ENCODE measurements at regions of chr6 and their contacts with region 1.

Region 1: DNA sequence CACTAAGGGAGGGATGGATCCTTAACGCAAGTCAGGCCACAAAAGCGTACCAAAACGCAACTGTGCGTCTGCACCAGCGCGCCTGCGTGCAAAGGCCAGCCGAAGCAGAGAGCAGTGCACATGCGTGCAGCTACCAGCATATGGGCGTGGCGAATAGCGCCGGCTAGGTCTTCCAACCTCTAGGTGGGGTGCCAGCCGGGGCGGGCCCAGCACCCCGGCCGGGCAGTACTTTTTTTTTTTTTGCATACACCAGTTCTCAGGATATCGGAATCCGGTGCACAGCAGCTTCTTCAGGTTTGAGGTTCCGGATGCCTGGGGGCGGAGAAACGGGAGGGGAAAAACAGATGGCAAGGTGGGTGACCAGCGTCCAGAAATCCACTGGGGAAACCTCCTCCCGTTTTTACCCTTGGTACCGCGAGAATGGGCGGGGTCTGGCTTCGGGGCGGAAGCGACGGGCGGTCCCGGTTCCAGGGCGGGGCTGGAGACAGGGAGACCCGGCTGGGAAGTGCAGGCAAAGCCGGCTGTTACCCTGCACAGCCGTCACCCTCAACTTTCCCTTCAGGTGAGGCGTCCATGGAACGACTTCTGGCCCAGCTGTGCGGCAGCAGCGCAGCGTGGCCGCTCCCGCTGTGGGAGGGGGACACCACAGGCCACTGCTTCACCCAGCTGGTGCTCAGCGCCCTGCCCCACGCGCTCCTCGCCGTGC is at the start of gene ABCC10:
- DNase-seq: peak; percentile 97
- ATAC-seq: peak; percentile 93
- H3K4me3 ChIP-seq: peak within 1 kb of the TSS; percentile 59 to 93 (median 83)
- H3K4me3 Mint-ChIP-seq: peak within 1 kb of the TSS; percentile 96
- H3K27ac ChIP-seq: peak within 1 kb of the TSS; percentile 72 to 88
- H3K27ac Mint-ChIP-seq: peak within 1 kb of the TSS; percentile 96
- H3K4me1 ChIP-seq: peaks cover 16 to 19% of the 10 kb centered on the region in 2 donors
- H3K4me1 Mint-ChIP-seq: peaks cover 24% of the 10 kb centered on the region
- H3K27me3 ChIP-seq: no peaks in the 10 kb centered on the region
- H3K27me3 Mint-ChIP-seq: no peaks in the 10 kb centered on the region
- CTCF ChIP-seq: peak; percentile 21
- total RNA-seq, gene ABCC10: 71.5 and 84.2 TPM in 2 replicates

Region 2: GRCh38 chr6:42851599-42851998 is 576.0 kb before region 1 on chr6:
- CTCF ChIA-PET with region 1: no interaction called
- POLR2A ChIA-PET with region 1: no interaction called
- intact Hi-C with region 1: no loop called
- DNase-seq: no peak
- ATAC-seq: no peak
- H3K4me3 ChIP-seq: no peak overlapping the region
- H3K4me3 Mint-ChIP-seq: no peak overlapping the region
- H3K27ac ChIP-seq: no peak overlapping the region
- H3K27ac Mint-ChIP-seq: no peak overlapping the region
- H3K4me1 ChIP-seq: no peaks in the 10 kb centered on the region
- H3K4me1 Mint-ChIP-seq: no peaks in the 10 kb centered on the region
- H3K27me3 ChIP-seq: no peaks in the 10 kb centered on the region
- H3K27me3 Mint-ChIP-seq: no peaks in the 10 kb centered on the region
- CTCF ChIP-seq: no peak

Region 3: GRCh38 chr6:43247113-43247999 is 180.2 kb before region 1 on chr6:
- CTCF ChIA-PET with region 1: no interaction called
- POLR2A ChIA-PET with region 1: no interaction called
- intact Hi-C with region 1: loop called (anchors 1 kb)
- DNase-seq: peak; percentile 87
- ATAC-seq: peak; percentile 96
- H3K4me3 ChIP-seq: peak overlapping the region; percentile 51 to 85 (median 72)
- H3K4me3 Mint-ChIP-seq: no peak overlapping the region
- H3K27ac ChIP-seq: peak overlapping the region; percentile 51 to 65
- H3K27ac Mint-ChIP-seq: peak overlapping the region; percentile 87
- H3K4me1 ChIP-seq: peaks cover 19 to 21% of the 10 kb centered on the region in 2 donors
- H3K4me1 Mint-ChIP-seq: peaks cover 22% of the 10 kb centered on the region
- H3K27me3 ChIP-seq: peaks cover 0 to 62% (median 38%) of the 10 kb centered on the region in 4 experiments
- H3K27me3 Mint-ChIP-seq: peaks cover 29% of the 10 kb centered on the region
- CTCF ChIP-seq: no peak

Region 4: GRCh38 chr6:43369174-43370022 is 58.2 kb before region 1 on chr6 and contains the start of gene ZNF318:
- CTCF ChIA-PET with region 1: interaction called, 8 read pairs
- POLR2A ChIA-PET with region 1: interaction called, 9 read pairs
- intact Hi-C with region 1: loop called (anchors 1 kb)
- DNase-seq: peak; percentile 98
- ATAC-seq: peak; percentile 90
- H3K4me3 ChIP-seq: peak within 1 kb of the TSS; percentile 83 to 95 (median 88)
- H3K4me3 Mint-ChIP-seq: peak within 1 kb of the TSS; percentile 98
- H3K27ac ChIP-seq: peak within 1 kb of the TSS; percentile 92 to 94
- H3K27ac Mint-ChIP-seq: peak within 1 kb of the TSS; percentile 97
- H3K4me1 ChIP-seq: peaks cover 64 to 69% of the 10 kb centered on the region in 2 donors
- H3K4me1 Mint-ChIP-seq: peaks cover 72% of the 10 kb centered on the region
- H3K27me3 ChIP-seq: no peaks in the 10 kb centered on the region
- H3K27me3 Mint-ChIP-seq: no peaks in the 10 kb centered on the region
- CTCF ChIP-seq: no peak
- total RNA-seq, gene ZNF318: 79.7 and 80.9 TPM in 2 replicates

Region 5: GRCh38 chr6:43454696-43455530 is 27.4 kb after region 1 on chr6:
- CTCF ChIA-PET with region 1: interaction called, 7 read pairs
- POLR2A ChIA-PET with region 1: interaction called, 4 read pairs
- intact Hi-C with region 1: loop called (anchors 1 kb)
- DNase-seq: peak; percentile 73
- ATAC-seq: peak; percentile 53
- H3K4me3 ChIP-seq: peak overlapping the region; percentile 18 to 67 (median 61)
- H3K4me3 Mint-ChIP-seq: peak overlapping the region; percentile 89
- H3K27ac ChIP-seq: no peak overlapping the region
- H3K27ac Mint-ChIP-seq: peak overlapping the region; percentile 63
- H3K4me1 ChIP-seq: peaks cover 7 to 12% of the 10 kb centered on the region in 2 donors
- H3K4me1 Mint-ChIP-seq: peaks cover 14% of the 10 kb centered on the region
- H3K27me3 ChIP-seq: peaks cover 0 to 4% (median 2%) of the 10 kb centered on the region in 4 experiments
- H3K27me3 Mint-ChIP-seq: peaks cover 3% of the 10 kb centered on the region
- CTCF ChIP-seq: peak; percentile 90

Region 6: DNA sequence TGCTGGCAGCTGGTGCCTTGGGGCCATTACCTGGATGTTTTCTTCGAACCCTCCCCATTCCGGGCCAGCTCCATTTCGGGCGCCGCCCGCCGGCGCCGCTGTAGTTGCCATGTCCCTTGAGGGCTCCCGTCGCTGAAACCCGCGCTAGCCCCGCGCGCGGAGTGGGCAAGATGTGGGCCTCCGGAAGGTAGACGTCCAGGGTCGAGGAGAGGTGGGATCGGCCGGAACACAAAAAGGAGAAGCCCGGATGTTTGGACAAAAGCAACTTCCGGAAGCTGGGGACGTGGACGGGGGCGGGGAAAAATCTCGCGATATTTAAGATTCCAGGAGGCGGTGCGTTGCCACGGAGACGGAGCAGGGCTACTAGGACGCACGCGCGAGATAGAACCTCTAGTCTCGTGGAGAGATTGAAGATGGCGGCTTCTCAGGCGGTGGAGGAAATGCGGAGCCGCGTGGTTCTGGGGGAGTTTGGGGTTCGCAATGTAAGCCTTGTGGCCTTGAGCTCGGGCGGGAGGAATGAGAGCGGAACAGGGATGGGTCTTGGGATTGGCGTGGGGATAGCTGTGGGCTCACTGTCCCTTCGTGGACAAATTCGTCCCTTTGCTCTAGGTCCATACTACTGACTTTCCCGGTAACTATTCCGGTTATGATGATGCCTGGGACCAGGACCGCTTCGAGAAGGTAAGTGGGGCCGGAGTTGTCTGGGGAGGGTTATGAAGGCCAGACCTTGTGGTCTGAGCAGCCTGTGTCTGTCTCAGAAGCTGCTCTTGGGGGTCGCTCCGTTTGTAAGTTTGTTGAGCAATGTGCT is 89.3 kb after region 1 on chr6 and contains the starts of genes POLR1C and YIPF3:
- CTCF ChIA-PET with region 1: no interaction called
- POLR2A ChIA-PET with region 1: interaction called, 5 read pairs
- intact Hi-C with region 1: loop called (anchors 2 kb)
- DNase-seq: peak; percentile 97
- ATAC-seq: peak; percentile 96
- H3K4me3 ChIP-seq: peak within 1 kb of the TSS; percentile 78 to 98 (median 91)
- H3K4me3 Mint-ChIP-seq: no peak within 1 kb of the TSS
- H3K27ac ChIP-seq: peak within 1 kb of the TSS; percentile 65 to 91
- H3K27ac Mint-ChIP-seq: no peak within 1 kb of the TSS
- H3K4me1 ChIP-seq: peaks cover 28 to 36% of the 10 kb centered on the region in 2 donors
- H3K4me1 Mint-ChIP-seq: peaks cover 27% of the 10 kb centered on the region
- H3K27me3 ChIP-seq: no peaks in the 10 kb centered on the region
- H3K27me3 Mint-ChIP-seq: no peaks in the 10 kb centered on the region
- CTCF ChIP-seq: no peak
- total RNA-seq, gene POLR1C: 42.0 and 43.3 TPM in 2 replicates
- total RNA-seq, gene YIPF3: 82.1 and 92.6 TPM in 2 replicates

Region 7: DNA sequence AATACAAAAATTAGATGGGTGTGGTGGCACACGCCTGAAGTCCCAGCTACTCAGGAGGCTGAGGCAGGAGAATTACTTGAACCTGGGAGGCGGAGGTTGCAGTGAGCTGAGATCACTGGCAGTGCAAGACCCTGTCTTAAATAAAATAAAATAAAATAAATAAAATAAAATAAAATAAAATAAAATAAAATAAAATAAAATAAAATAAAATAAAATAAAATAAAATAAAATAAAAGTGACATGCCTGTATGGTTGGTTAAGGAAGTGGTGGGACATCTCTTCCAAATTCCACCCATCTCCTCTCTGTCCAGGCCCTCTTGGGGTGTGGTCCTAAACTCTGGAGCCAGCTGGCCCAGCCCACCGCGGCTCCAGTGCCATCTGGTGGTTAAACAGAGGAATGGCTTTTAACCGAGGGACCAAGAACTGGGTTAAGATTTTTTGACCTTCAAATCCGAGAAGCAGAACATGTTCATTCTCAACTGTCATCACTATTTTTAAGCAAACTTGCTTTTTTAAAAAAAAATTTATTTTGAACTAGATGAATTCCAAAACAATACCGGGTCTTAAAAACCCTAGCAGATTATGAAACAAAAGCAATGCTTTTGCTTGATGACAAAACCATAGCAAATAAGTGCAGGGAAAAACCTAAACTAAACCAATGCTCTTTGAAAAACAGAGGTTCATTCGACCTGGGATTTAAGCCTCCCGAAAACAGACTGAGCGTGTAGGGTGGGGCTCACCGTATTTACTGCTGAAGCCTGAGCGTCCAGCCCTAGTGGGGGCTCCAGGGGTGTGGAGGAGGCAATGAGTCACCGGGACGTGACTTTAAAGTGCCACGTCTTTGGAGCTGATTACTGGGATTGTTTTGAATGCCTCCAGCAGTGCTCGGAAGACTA is 1028.8 kb after region 1 on chr6:
- CTCF ChIA-PET with region 1: no interaction called
- POLR2A ChIA-PET with region 1: no interaction called
- intact Hi-C with region 1: no loop called
- DNase-seq: peak; percentile 55
- ATAC-seq: peak; percentile 83
- H3K4me3 ChIP-seq: no peak overlapping the region
- H3K4me3 Mint-ChIP-seq: no peak overlapping the region
- H3K27ac ChIP-seq: no peak overlapping the region
- H3K27ac Mint-ChIP-seq: no peak overlapping the region
- H3K4me1 ChIP-seq: no peaks in the 10 kb centered on the region
- H3K4me1 Mint-ChIP-seq: no peaks in the 10 kb centered on the region
- H3K27me3 ChIP-seq: peaks cover 0 to 5% (median 3%) of the 10 kb centered on the region in 4 experiments
- H3K27me3 Mint-ChIP-seq: peaks cover 17% of the 10 kb centered on the region
- CTCF ChIP-seq: peak; percentile 90

Region 8: GRCh38 chr6:44475779-44476434 is 1048.3 kb after region 1 on chr6:
- CTCF ChIA-PET with region 1: no interaction called
- POLR2A ChIA-PET with region 1: no interaction called
- intact Hi-C with region 1: no loop called
- DNase-seq: peak; percentile 63
- ATAC-seq: peak; percentile 39
- H3K4me3 ChIP-seq: no peak overlapping the region
- H3K4me3 Mint-ChIP-seq: no peak overlapping the region
- H3K27ac ChIP-seq: no peak overlapping the region
- H3K27ac Mint-ChIP-seq: no peak overlapping the region
- H3K4me1 ChIP-seq: peaks cover 0 to 6% of the 10 kb centered on the region in 2 donors
- H3K4me1 Mint-ChIP-seq: no peaks in the 10 kb centered on the region
- H3K27me3 ChIP-seq: peaks cover 0 to 9% (median 1%) of the 10 kb centered on the region in 4 experiments
- H3K27me3 Mint-ChIP-seq: peaks cover 15% of the 10 kb centered on the region
- CTCF ChIP-seq: peak; percentile 72